Activated naive CD4-positive, alpha-beta T cell treated with anti-CD3 and anti-CD28 coated beads for 36 hours (primary cell): ENCODE measurements at regions of chr3 and their contacts with region 1.

Region 1: GRCh38 chr3:183555541-183556081 is at the start of gene KLHL6:
- DNase-seq: peak; percentile 91
- H3K4me3 Mint-ChIP-seq: peak within 1 kb of the TSS; percentile 99
- H3K27ac Mint-ChIP-seq: peak within 1 kb of the TSS; percentile 100
- H3K4me1 Mint-ChIP-seq: peaks cover 40% of the 10 kb centered on the region
- H3K27me3 Mint-ChIP-seq: no peaks in the 10 kb centered on the region
- total RNA-seq, gene KLHL6: 82.3 to 82.4 TPM

Region 2: GRCh38 chr3:182792901-182793662 is 762.5 kb before region 1 on chr3 and contains the start of gene ATP11B:
- CTCF ChIA-PET with region 1: no interaction called
- intact Hi-C with region 1: loop called (anchors 2 kb)
- DNase-seq: peak; percentile 70
- H3K4me3 Mint-ChIP-seq: peak within 1 kb of the TSS; percentile 99
- H3K27ac Mint-ChIP-seq: peak within 1 kb of the TSS; percentile 97
- H3K4me1 Mint-ChIP-seq: peaks cover 25% of the 10 kb centered on the region
- H3K27me3 Mint-ChIP-seq: no peaks in the 10 kb centered on the region
- total RNA-seq, gene ATP11B: 86.6 to 92.3 TPM

Region 3: DNA sequence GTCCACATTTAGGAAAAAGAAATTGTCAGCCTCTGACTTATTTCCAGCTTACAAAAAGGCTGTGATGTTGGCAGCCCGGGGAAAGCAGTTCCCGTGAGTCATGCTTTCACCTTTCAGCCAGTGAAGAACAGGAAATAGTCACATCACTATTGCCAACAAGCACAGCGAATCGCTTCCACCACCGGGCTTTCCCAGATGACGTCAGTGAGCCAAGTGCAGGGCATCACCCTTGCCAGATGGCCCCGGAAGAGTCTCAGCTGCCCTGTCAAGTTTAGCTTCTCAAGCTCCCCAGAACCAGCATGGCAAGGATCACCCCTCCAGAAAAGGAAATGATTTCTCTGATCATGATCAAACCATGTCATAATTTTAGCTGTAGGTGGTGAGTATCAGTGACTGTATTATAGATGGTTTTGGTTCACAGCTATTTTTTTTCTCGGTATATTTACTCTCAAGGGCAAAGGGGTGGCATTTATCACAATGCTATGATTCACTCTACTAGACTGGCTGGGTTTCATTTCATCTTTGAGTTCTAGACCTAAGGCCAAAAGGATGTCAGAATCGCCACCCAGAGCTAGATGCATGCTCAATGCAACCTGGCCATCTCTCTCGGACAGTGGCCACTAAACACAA is 269.7 kb before region 1 on chr3:
- CTCF ChIA-PET with region 1: no interaction called
- intact Hi-C with region 1: loop called (anchors 1 kb)
- DNase-seq: peak; percentile 98
- H3K4me3 Mint-ChIP-seq: peak overlapping the region; percentile 67
- H3K27ac Mint-ChIP-seq: peak overlapping the region; percentile 97
- H3K4me1 Mint-ChIP-seq: peaks cover 40% of the 10 kb centered on the region
- H3K27me3 Mint-ChIP-seq: no peaks in the 10 kb centered on the region

Region 4: DNA sequence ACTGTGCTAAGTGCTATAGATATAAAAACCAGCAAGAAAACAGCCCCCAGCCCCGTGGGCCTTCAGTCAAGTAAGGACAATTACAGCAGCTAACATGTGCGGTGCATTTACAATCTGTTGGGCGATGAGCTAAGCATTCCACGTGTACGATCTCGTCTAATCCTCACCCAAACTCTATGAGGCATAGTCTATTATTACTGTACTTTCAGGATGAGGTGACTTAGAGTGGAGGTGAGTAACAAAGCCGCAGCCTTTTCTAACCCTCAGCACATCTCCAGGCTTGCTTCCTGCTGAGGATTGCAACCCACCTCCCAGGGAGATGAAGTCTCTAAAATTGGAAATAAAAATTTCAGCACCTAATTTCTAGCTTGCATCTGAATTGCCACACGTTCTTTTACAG is 74.0 kb before region 1 on chr3:
- CTCF ChIA-PET with region 1: interaction called, 4 read pairs
- intact Hi-C with region 1: loop called (anchors 1 kb)
- DNase-seq: no peak
- H3K4me3 Mint-ChIP-seq: no peak overlapping the region
- H3K27ac Mint-ChIP-seq: no peak overlapping the region
- H3K4me1 Mint-ChIP-seq: peaks cover 6% of the 10 kb centered on the region
- H3K27me3 Mint-ChIP-seq: no peaks in the 10 kb centered on the region

Region 5: DNA sequence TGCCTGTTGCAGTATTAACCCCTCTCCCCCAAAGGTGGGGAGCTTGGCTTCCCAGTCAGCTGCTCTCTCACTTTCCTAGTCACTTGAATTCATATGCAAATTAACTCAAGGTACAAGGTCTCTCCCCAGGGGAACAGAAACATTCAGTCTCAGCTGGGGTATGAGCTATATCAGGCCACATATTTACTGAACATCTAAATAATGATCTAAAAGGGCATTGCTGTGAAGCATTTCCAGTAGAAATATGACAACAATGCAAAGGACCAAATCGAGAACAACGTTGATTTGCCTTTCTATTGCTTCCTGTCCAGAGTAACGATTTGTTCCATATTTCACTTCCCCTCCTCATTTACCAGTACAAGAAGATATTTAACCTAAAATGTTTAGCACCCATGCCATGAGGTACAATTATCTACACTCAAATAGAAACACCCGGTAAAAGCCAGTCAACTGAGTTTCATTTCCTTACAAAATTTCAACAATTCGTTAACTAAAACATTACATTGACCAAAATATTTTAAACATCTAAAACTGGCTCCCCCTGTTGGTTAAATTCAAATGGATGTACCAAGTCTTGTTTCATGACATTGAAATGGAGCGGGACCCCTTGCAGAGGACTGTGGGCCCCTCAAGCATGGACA is 36.4 kb after region 1 on chr3:
- CTCF ChIA-PET with region 1: interaction called, 3 read pairs
- intact Hi-C with region 1: loop called (anchors 1 kb)
- DNase-seq: peak; percentile 19
- H3K4me3 Mint-ChIP-seq: peak overlapping the region; percentile 37
- H3K27ac Mint-ChIP-seq: peak overlapping the region; percentile 86
- H3K4me1 Mint-ChIP-seq: peaks cover 48% of the 10 kb centered on the region
- H3K27me3 Mint-ChIP-seq: no peaks in the 10 kb centered on the region

Region 6: GRCh38 chr3:183884427-183885296 is 329.1 kb after region 1 on chr3 and contains the start of gene PARL:
- CTCF ChIA-PET with region 1: no interaction called
- intact Hi-C with region 1: loop called (anchors 1 kb)
- DNase-seq: peak; percentile 98
- H3K4me3 Mint-ChIP-seq: peak within 1 kb of the TSS; percentile 94
- H3K27ac Mint-ChIP-seq: peak within 1 kb of the TSS; percentile 88
- H3K4me1 Mint-ChIP-seq: peaks cover 31% of the 10 kb centered on the region
- H3K27me3 Mint-ChIP-seq: no peaks in the 10 kb centered on the region
- total RNA-seq, gene PARL: 92.0 to 92.8 TPM